ENCODE measurements at regions of chr2 and their contacts with region 1.

Region 1: DNA sequence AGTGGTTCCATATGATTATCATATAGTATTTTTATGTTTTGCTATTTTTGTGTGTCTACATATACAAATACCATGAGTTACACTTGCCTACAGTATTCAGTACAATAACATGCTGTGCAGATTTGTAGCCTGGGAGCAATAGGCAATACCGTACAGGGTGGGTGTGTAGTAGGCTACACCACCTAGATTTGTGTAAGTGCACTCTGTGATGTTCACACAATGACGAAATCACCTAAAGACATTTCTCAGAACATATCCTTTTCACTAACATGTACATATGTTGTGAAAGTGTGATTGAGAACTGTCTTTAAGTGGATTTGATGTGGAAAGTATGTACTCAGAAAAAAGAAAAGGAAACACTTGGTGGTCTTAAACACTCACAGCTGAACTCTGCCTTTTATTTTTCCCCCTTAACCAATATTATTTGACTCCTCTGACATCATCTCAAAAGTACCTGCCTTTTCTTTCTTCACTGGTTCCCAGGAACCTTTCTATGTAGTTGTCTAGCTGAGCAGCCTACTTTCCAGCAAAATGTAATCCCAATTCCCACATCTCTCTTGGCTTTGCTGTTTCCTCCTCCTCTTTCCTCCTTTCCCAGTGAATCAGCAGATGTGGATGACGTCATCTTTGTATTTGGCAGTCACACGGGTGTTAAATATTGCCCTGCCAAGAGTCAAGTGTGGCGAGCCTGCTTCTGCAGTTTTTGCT is 47.7 kb downstream of the OSBPL6 start:
- DNase-seq: peak in 3 of 4 experiments; percentile 25 to 53 (median 33)
- ATAC-seq: peak; percentile 55
- H3K4me3 ChIP-seq: no peak overlapping the region
- H3K27ac ChIP-seq: no peak overlapping the region; the same call in 2 of the 3 replicates
- H3K4me1 ChIP-seq: peaks cover 0 to 15% of the 10 kb centered on the region in 2 experiments; a peak in 2 of 5 replicates
- H3K27me3 ChIP-seq: no peaks in the 10 kb centered on the region
- CTCF ChIP-seq: no peak
- EP300 ChIP-seq: no peak
- POLR2A ChIP-seq: no peak
- RAD21 ChIP-seq: no peak

Region 2: DNA sequence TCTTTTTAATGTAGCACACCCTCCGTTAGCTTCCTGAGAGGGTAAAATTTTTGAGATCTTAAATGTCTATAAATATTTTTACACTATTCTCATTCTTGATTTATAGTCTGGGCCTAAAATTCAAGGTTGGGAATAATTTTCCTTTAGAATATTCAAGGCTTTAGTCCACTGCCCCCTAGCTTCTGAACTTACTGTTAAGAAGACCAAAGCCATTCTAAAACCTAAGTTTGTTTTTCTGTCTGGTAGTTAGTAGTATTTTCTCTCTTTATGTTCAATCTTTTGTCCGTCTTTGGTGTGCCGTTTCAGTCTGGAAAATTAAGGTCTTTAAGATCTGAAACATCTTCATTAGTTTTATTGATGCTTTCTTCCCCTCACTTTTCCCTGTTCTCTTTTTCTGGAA is 33.2 kb before region 1 on chr2:
- CTCF ChIA-PET with region 1: no interaction called
- POLR2A ChIA-PET with region 1: no interaction called
- in situ Hi-C with region 1: no loop called
- intact Hi-C with region 1: loop called (anchors 1 kb)
- DNase-seq: peak in 1 of 4 experiments; percentile 26
- ATAC-seq: no peak
- H3K4me3 ChIP-seq: no peak overlapping the region
- H3K27ac ChIP-seq: no peak overlapping the region
- H3K4me1 ChIP-seq: peaks cover 3 to 12% of the 10 kb centered on the region in 2 experiments; a peak in 3 of 5 replicates
- H3K27me3 ChIP-seq: no peaks in the 10 kb centered on the region; a peak in 1 of 5 replicates
- CTCF ChIP-seq: peak in 2 of 3 experiments; percentile 43 to 59; a peak in 4 of 6 replicates
- EP300 ChIP-seq: no peak
- POLR2A ChIP-seq: no peak
- RAD21 ChIP-seq: peak in 1 of 2 experiments; percentile 60; a peak in 3 of 4 replicates